CD8-positive, alpha-beta T cell (primary cell): ENCODE measurements at regions of chr5 and their contacts with region 1.

Region 1: GRCh38 chr5:179806250-179807222 is at the start of gene MGAT4B:
- DNase-seq: peak; percentile 30 to 80 (median 58)
- ATAC-seq: peak; percentile 74
- H3K4me3 ChIP-seq: peak within 1 kb of the TSS; percentile 52 to 67
- H3K4me3 Mint-ChIP-seq: peak within 1 kb of the TSS; percentile 79
- H3K27ac ChIP-seq: peak within 1 kb of the TSS; percentile 51 to 60
- H3K27ac Mint-ChIP-seq: peak within 1 kb of the TSS; percentile 79
- H3K4me1 ChIP-seq: peaks cover 33% of the 10 kb centered on the region
- H3K4me1 Mint-ChIP-seq: peaks cover 29% of the 10 kb centered on the region
- H3K27me3 ChIP-seq: no peaks in the 10 kb centered on the region
- H3K27me3 Mint-ChIP-seq: no peaks in the 10 kb centered on the region
- CTCF ChIP-seq: no peak
- total RNA-seq, gene MGAT4B: 113 to 126 TPM

Region 2: GRCh38 chr5:179747811-179748210 is 58.7 kb before region 1 on chr5:
- CTCF ChIA-PET with region 1: no interaction called
- POLR2A ChIA-PET with region 1: no interaction called
- intact Hi-C with region 1: no loop called
- DNase-seq: no peak
- ATAC-seq: no peak
- H3K4me3 ChIP-seq: no peak overlapping the region
- H3K4me3 Mint-ChIP-seq: no peak overlapping the region
- H3K27ac ChIP-seq: no peak overlapping the region
- H3K27ac Mint-ChIP-seq: no peak overlapping the region
- H3K4me1 ChIP-seq: peaks cover 5% of the 10 kb centered on the region
- H3K4me1 Mint-ChIP-seq: peaks cover 30% of the 10 kb centered on the region
- H3K27me3 ChIP-seq: no peaks in the 10 kb centered on the region
- H3K27me3 Mint-ChIP-seq: no peaks in the 10 kb centered on the region
- CTCF ChIP-seq: no peak

Region 3: DNA sequence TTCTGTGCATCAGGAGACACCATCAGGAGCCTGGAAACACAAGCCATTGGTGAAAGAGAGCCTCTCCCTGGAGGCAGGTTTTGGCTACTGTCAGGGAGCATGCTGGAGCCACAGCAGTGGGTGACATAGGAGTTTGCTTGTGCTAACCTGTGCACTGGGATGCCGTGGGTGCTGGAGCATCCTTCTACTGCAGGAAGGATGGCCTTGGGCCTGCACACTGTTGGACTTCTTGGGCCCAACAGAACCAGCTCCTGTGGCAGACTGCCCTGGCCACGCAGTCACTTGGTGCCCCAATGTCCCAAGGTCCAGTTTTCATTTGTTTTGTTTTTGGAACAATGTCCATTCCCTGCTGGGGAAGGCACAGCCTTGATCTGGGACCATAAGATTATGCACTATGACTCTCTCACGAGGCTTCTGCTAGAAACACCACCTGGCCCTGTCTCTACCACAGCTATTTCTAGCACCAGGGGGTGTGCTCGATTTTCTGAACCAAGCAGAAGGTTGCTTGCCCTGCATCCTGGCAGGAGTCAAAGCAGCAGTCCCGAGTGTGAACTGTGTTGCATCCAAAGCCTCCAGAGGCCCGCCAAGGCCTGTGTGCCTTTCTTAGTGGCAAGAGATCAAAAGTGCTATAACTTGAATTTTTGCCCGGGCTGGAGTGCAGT is 18.2 kb before region 1 on chr5:
- CTCF ChIA-PET with region 1: interaction called, 12 read pairs
- POLR2A ChIA-PET with region 1: no interaction called
- intact Hi-C with region 1: no loop called
- DNase-seq: no peak
- ATAC-seq: no peak
- H3K4me3 ChIP-seq: no peak overlapping the region
- H3K4me3 Mint-ChIP-seq: no peak overlapping the region
- H3K27ac ChIP-seq: no peak overlapping the region
- H3K27ac Mint-ChIP-seq: no peak overlapping the region
- H3K4me1 ChIP-seq: peaks cover 4% of the 10 kb centered on the region
- H3K4me1 Mint-ChIP-seq: peaks cover 4% of the 10 kb centered on the region
- H3K27me3 ChIP-seq: no peaks in the 10 kb centered on the region
- H3K27me3 Mint-ChIP-seq: no peaks in the 10 kb centered on the region
- CTCF ChIP-seq: no peak

Region 4: GRCh38 chr5:179821581-179822432 is 15.3 kb after region 1 on chr5:
- CTCF ChIA-PET with region 1: interaction called, 12 read pairs
- POLR2A ChIA-PET with region 1: interaction called, 11 read pairs
- intact Hi-C with region 1: loop called (anchors 1 kb)
- DNase-seq: peak; percentile 79 to 94 (median 88)
- ATAC-seq: peak; percentile 63
- H3K4me3 ChIP-seq: peak overlapping the region; percentile 81 to 94
- H3K4me3 Mint-ChIP-seq: peak overlapping the region; percentile 95
- H3K27ac ChIP-seq: peak overlapping the region; percentile 92 to 99
- H3K27ac Mint-ChIP-seq: peak overlapping the region; percentile 96
- H3K4me1 ChIP-seq: peaks cover 47% of the 10 kb centered on the region
- H3K4me1 Mint-ChIP-seq: peaks cover 59% of the 10 kb centered on the region
- H3K27me3 ChIP-seq: peaks cover 0 to 2% of the 10 kb centered on the region in 2 experiments
- H3K27me3 Mint-ChIP-seq: no peaks in the 10 kb centered on the region
- CTCF ChIP-seq: no peak

Region 5: GRCh38 chr5:179836225-179837019 is 29.9 kb after region 1 on chr5:
- CTCF ChIA-PET with region 1: interaction called, 8 read pairs
- POLR2A ChIA-PET with region 1: no interaction called
- intact Hi-C with region 1: loop called (anchors 5 kb)
- DNase-seq: peak in 8 of 9 experiments; percentile 33 to 83 (median 60)
- ATAC-seq: peak; percentile 93
- H3K4me3 ChIP-seq: no peak overlapping the region
- H3K4me3 Mint-ChIP-seq: peak overlapping the region; percentile 23
- H3K27ac ChIP-seq: peak overlapping the region; percentile 34 to 70
- H3K27ac Mint-ChIP-seq: peak overlapping the region; percentile 87
- H3K4me1 ChIP-seq: peaks cover 15% of the 10 kb centered on the region
- H3K4me1 Mint-ChIP-seq: peaks cover 17% of the 10 kb centered on the region
- H3K27me3 ChIP-seq: no peaks in the 10 kb centered on the region
- H3K27me3 Mint-ChIP-seq: no peaks in the 10 kb centered on the region
- CTCF ChIP-seq: no peak

Region 6: GRCh38 chr5:179907570-179908324 is 101.2 kb after region 1 on chr5 and contains the start of gene TBC1D9B:
- CTCF ChIA-PET with region 1: interaction called, 6 read pairs
- POLR2A ChIA-PET with region 1: interaction called, 5 read pairs
- intact Hi-C with region 1: loop called (anchors 1 kb)
- DNase-seq: peak; percentile 37 to 90 (median 67)
- ATAC-seq: peak; percentile 90
- H3K4me3 ChIP-seq: peak within 1 kb of the TSS; percentile 52 to 57
- H3K4me3 Mint-ChIP-seq: peak within 1 kb of the TSS; percentile 86
- H3K27ac ChIP-seq: peak within 1 kb of the TSS in 1 of 2 experiments; percentile 54
- H3K27ac Mint-ChIP-seq: peak within 1 kb of the TSS; percentile 79
- H3K4me1 ChIP-seq: peaks cover 17% of the 10 kb centered on the region
- H3K4me1 Mint-ChIP-seq: peaks cover 15% of the 10 kb centered on the region
- H3K27me3 ChIP-seq: no peaks in the 10 kb centered on the region
- H3K27me3 Mint-ChIP-seq: no peaks in the 10 kb centered on the region
- CTCF ChIP-seq: peak; percentile 14
- total RNA-seq, gene TBC1D9B: 39.7 to 48.1 TPM

Region 7: DNA sequence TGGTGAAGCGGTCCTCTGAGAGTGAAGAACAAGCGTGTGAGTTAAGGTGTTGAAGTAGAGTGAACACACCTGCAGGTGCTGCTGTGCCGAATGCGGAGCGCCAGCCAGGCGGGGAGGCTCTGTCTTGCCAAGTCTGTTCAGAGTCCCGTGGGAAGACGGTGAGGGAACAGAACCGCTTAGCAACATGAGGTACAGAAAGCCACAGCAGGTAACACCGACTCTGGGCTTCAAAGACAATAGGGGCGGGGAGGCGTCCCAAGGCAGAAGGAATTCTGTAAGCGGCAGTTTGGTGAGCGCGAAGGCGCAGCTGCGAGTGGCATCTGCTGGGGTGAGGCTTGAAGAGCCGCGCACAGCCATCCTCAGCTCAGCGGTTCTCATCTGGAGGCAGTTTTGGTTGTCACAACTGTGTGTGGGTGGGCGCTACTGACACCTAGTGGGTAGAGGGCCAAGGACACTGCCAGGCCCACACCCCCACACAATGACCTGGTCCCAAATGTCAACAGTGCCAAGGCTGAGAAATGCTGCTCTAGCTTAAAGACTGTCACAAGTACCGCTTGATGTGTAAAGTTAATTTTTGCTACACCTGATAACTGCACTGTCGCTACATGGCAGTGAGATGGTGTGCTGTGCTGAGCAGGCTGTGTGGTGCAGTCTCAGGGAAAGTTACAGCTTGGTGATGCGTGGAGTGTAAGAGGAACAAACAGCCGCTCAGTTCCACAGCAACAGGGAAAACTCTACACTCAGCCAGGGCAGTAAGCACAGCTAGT is 168.6 kb after region 1 on chr5:
- CTCF ChIA-PET with region 1: interaction called, 5 read pairs
- POLR2A ChIA-PET with region 1: no interaction called
- intact Hi-C with region 1: loop called in 1 of 2 experiments (anchors 10 kb)
- DNase-seq: peak in 5 of 9 experiments; percentile 13 to 50 (median 27)
- ATAC-seq: peak; percentile 52
- H3K4me3 ChIP-seq: no peak overlapping the region
- H3K4me3 Mint-ChIP-seq: no peak overlapping the region
- H3K27ac ChIP-seq: no peak overlapping the region
- H3K27ac Mint-ChIP-seq: no peak overlapping the region
- H3K4me1 ChIP-seq: no peaks in the 10 kb centered on the region
- H3K4me1 Mint-ChIP-seq: peaks cover 12% of the 10 kb centered on the region
- H3K27me3 ChIP-seq: no peaks in the 10 kb centered on the region
- H3K27me3 Mint-ChIP-seq: no peaks in the 10 kb centered on the region
- CTCF ChIP-seq: no peak

Region 8: DNA sequence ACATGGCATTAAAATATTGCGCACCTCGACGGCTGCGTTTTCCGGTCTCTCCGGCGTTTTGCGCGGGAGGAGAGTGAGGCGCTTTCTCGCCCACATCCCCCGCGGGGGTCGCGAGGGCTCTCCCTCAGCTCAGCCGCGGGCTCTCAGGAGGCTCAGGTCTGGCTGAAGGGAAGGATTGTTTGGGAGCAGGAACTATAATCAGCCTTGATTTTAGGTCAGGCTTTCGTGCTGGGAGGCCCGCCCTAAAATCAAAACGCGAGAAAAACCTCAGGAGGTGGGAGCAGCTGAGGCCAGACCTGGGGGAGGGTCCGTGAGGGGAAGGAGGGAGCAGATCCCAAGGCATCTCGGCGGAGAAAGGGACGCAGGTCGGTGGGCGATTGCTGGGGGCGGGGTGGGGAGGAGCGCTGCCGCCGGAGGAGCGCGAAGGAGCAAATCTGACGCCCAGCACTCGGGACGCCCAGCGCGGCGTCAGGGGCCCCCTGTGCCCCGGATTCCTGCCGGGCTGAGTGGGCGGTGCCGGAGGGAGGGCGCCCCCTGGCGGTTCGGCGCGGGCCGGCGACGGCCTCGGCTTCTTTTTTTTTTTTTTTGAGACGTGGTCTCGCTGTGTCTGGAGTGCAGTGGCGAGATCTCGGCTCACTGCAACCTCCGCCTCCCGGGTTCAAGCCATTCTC is 283.7 kb after region 1 on chr5:
- CTCF ChIA-PET with region 1: interaction called, 4 read pairs
- POLR2A ChIA-PET with region 1: no interaction called
- intact Hi-C with region 1: loop called in 1 of 2 experiments (anchors 2 kb)
- DNase-seq: peak; percentile 62 to 90 (median 81)
- ATAC-seq: peak; percentile 71
- H3K4me3 ChIP-seq: peak overlapping the region; percentile 57
- H3K4me3 Mint-ChIP-seq: peak overlapping the region; percentile 86
- H3K27ac ChIP-seq: peak overlapping the region in 1 of 2 experiments; percentile 42
- H3K27ac Mint-ChIP-seq: peak overlapping the region; percentile 88
- H3K4me1 ChIP-seq: peaks cover 16% of the 10 kb centered on the region
- H3K4me1 Mint-ChIP-seq: peaks cover 27% of the 10 kb centered on the region
- H3K27me3 ChIP-seq: no peaks in the 10 kb centered on the region
- H3K27me3 Mint-ChIP-seq: peaks cover 4% of the 10 kb centered on the region
- CTCF ChIP-seq: peak; percentile 68

Region 9: GRCh38 chr5:180323941-180324600 is 517.5 kb after region 1 on chr5:
- CTCF ChIA-PET with region 1: no interaction called
- POLR2A ChIA-PET with region 1: no interaction called
- intact Hi-C with region 1: no loop called
- DNase-seq: no peak
- ATAC-seq: no peak
- H3K4me3 ChIP-seq: no peak overlapping the region
- H3K4me3 Mint-ChIP-seq: no peak overlapping the region
- H3K27ac ChIP-seq: no peak overlapping the region
- H3K27ac Mint-ChIP-seq: no peak overlapping the region
- H3K4me1 ChIP-seq: no peaks in the 10 kb centered on the region
- H3K4me1 Mint-ChIP-seq: no peaks in the 10 kb centered on the region
- H3K27me3 ChIP-seq: no peaks in the 10 kb centered on the region
- H3K27me3 Mint-ChIP-seq: no peaks in the 10 kb centered on the region
- CTCF ChIP-seq: no peak